ENCODE measurements at regions of chr10 and their contacts with region 1.

Region 1: GRCh38 chr10:103727546-103727963 is 127.8 kb downstream of the SH3PXD2A start:
- DNase-seq: no peak
- H3K4me3 ChIP-seq: no peak overlapping the region
- H3K27ac ChIP-seq: peak overlapping the region; percentile 4
- H3K4me1 ChIP-seq: peaks cover 27% of the 10 kb centered on the region
- H3K27me3 ChIP-seq: no peaks in the 10 kb centered on the region
- CTCF ChIP-seq: no peak
- POLR2A ChIP-seq: no peak

Region 2: GRCh38 chr10:103990121-103990520 is 262.6 kb after region 1 on chr10:
- intact Hi-C with region 1: loop called (anchors 10 kb)
- DNase-seq: no peak
- H3K4me3 ChIP-seq: no peak overlapping the region
- H3K27ac ChIP-seq: no peak overlapping the region
- H3K4me1 ChIP-seq: peaks cover 46% of the 10 kb centered on the region
- H3K27me3 ChIP-seq: no peaks in the 10 kb centered on the region
- CTCF ChIP-seq: no peak
- POLR2A ChIP-seq: no peak

Measured in vagina (tissue), 2 donors.